HepG2 (cell line): ENCODE measurements at regions of chr3 and their contacts with region 1.

Region 1: GRCh38 chr3:14508961-14509795 is 31.0 kb downstream of the GRIP2 start:
- DNase-seq: peak; percentile 30
- ATAC-seq: peak; percentile 84
- H3K4me3 ChIP-seq: no peak overlapping the region
- H3K27ac ChIP-seq: no peak overlapping the region
- H3K4me1 ChIP-seq: no peaks in the 10 kb centered on the region
- H3K27me3 ChIP-seq: peaks cover 4 to 24% of the 10 kb centered on the region in 2 experiments; a peak in 3 of 5 replicates
- CTCF ChIP-seq: peak; percentile 87
- EP300 ChIP-seq: no peak
- POLR2A ChIP-seq: no peak
- RAD21 ChIP-seq: peak; percentile 79

Region 2: GRCh38 chr3:14548321-14548729 is 39.1 kb after region 1 on chr3:
- CTCF ChIA-PET with region 1: interaction called, 15 read pairs
- POLR2A ChIA-PET with region 1: no interaction called
- in situ Hi-C with region 1: loop called (anchors 5 kb)
- intact Hi-C with region 1: loop called (anchors 1 kb)
- DNase-seq: peak; percentile 56
- ATAC-seq: peak; percentile 95
- H3K4me3 ChIP-seq: no peak overlapping the region
- H3K27ac ChIP-seq: no peak overlapping the region
- H3K4me1 ChIP-seq: peaks cover 8% of the 10 kb centered on the region
- H3K27me3 ChIP-seq: peaks cover 3 to 5% of the 10 kb centered on the region in 2 experiments; a peak in 2 of 5 replicates
- CTCF ChIP-seq: peak; percentile 87
- EP300 ChIP-seq: no peak
- POLR2A ChIP-seq: no peak
- RAD21 ChIP-seq: peak; percentile 68

Region 3: GRCh38 chr3:14921078-14921616 is 412.0 kb after region 1 on chr3:
- CTCF ChIA-PET with region 1: no interaction called
- POLR2A ChIA-PET with region 1: no interaction called
- in situ Hi-C with region 1: no loop called
- intact Hi-C with region 1: no loop called
- DNase-seq: peak; percentile 68
- ATAC-seq: peak; percentile 90
- H3K4me3 ChIP-seq: no peak overlapping the region; a peak in 1 of 6 replicates
- H3K27ac ChIP-seq: no peak overlapping the region
- H3K4me1 ChIP-seq: peaks cover 6% of the 10 kb centered on the region; the same call in 1 of the 2 replicates
- H3K27me3 ChIP-seq: peaks cover 0 to 42% of the 10 kb centered on the region in 2 experiments; a peak in 2 of 5 replicates
- CTCF ChIP-seq: peak; percentile 99
- EP300 ChIP-seq: no peak
- POLR2A ChIP-seq: no peak
- RAD21 ChIP-seq: peak; percentile 96